Activated B cell treated with CpG ODN at 0.5 μM for 24 hours (primary cell): ENCODE measurements at regions of chr2 and their contacts with region 1.

Region 1: GRCh38 chr2:162233197-162233596 is 10.0 kb downstream of the FAP start:
- DNase-seq: no peak
- ATAC-seq: no peak
- H3K4me3 Mint-ChIP-seq: no peak overlapping the region
- H3K27ac Mint-ChIP-seq: no peak overlapping the region
- H3K4me1 Mint-ChIP-seq: no peaks in the 10 kb centered on the region
- H3K27me3 Mint-ChIP-seq: peaks cover 3% of the 10 kb centered on the region
- CTCF ChIP-seq: no peak

Region 2: GRCh38 chr2:162221064-162221463 is 12.1 kb before region 1 on chr2:
- CTCF ChIA-PET with region 1: interaction called, 18 read pairs
- POLR2A ChIA-PET with region 1: no interaction called
- intact Hi-C with region 1: no loop called
- DNase-seq: peak; percentile 35
- ATAC-seq: peak; percentile 64
- H3K4me3 Mint-ChIP-seq: no peak overlapping the region
- H3K27ac Mint-ChIP-seq: no peak overlapping the region
- H3K4me1 Mint-ChIP-seq: no peaks in the 10 kb centered on the region
- H3K27me3 Mint-ChIP-seq: peaks cover 15% of the 10 kb centered on the region
- CTCF ChIP-seq: peak; percentile 40

Region 3: GRCh38 chr2:162261032-162261945 is 28.1 kb after region 1 on chr2:
- CTCF ChIA-PET with region 1: no interaction called
- POLR2A ChIA-PET with region 1: no interaction called
- intact Hi-C with region 1: no loop called
- DNase-seq: no peak
- ATAC-seq: no peak
- H3K4me3 Mint-ChIP-seq: no peak overlapping the region
- H3K27ac Mint-ChIP-seq: peak overlapping the region; percentile 5
- H3K4me1 Mint-ChIP-seq: peaks cover 14% of the 10 kb centered on the region
- H3K27me3 Mint-ChIP-seq: no peaks in the 10 kb centered on the region
- CTCF ChIP-seq: no peak